Naive thymus-derived CD4-positive, alpha-beta T cell (primary cell): ENCODE measurements at regions of chr22 and their contacts with region 1.

Region 1: GRCh38 chr22:37300551-37301017 is 18.3 kb downstream of the CYTH4 start:
- DNase-seq: peak in 8 of 9 donors; percentile 37 to 54 (median 47)
- ATAC-seq: peak; percentile 48
- H3K4me3 ChIP-seq: peak overlapping the region; percentile 21
- H3K4me3 Mint-ChIP-seq: peak overlapping the region; percentile 60 to 88 (median 76)
- H3K27ac ChIP-seq: peak overlapping the region; percentile 77
- H3K27ac Mint-ChIP-seq: peak overlapping the region; percentile 93 to 99 (median 96)
- H3K4me1 ChIP-seq: peaks cover 26 to 63% of the 10 kb centered on the region in 2 donors
- H3K4me1 Mint-ChIP-seq: peaks cover 47 to 83% (median 78%) of the 10 kb centered on the region in 7 donors
- H3K27me3 ChIP-seq: no peaks in the 10 kb centered on the region
- H3K27me3 Mint-ChIP-seq: no peaks in the 10 kb centered on the region

Region 2: DNA sequence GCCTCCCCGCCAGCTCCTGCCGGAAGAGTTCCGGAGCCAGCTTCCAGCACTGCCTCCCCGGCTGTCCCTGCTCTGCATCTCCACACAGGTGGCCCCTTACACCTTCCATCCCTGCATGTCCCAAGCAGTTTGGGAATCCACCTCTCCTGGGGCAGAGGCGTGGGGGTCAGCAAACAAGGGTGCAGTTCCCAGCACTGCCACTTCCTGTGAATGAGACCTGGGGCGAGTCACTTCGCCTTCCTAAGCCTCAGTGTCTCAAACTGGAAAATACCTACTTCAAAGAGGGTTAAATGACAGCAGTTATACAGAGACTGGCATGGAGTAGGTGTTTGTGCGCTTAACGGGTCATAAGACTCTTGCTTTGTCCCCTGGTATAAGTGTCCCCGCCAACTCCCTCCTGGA is 13.0 kb before region 1 on chr22:
- CTCF ChIA-PET with region 1: interaction called, 3 read pairs
- POLR2A ChIA-PET with region 1: interaction called, 29 read pairs
- intact Hi-C with region 1: no loop called
- DNase-seq: no peak
- ATAC-seq: no peak
- H3K4me3 ChIP-seq: no peak overlapping the region
- H3K4me3 Mint-ChIP-seq: peak overlapping the region in 8 of 10 donors; percentile 21 to 98 (median 44)
- H3K27ac ChIP-seq: peak overlapping the region; percentile 61
- H3K27ac Mint-ChIP-seq: peak overlapping the region in 8 of 9 donors; percentile 60 to 99 (median 86)
- H3K4me1 ChIP-seq: peaks cover 19 to 28% of the 10 kb centered on the region in 2 donors
- H3K4me1 Mint-ChIP-seq: peaks cover 64 to 84% (median 77%) of the 10 kb centered on the region in 7 donors
- H3K27me3 ChIP-seq: no peaks in the 10 kb centered on the region
- H3K27me3 Mint-ChIP-seq: no peaks in the 10 kb centered on the region

Region 3: DNA sequence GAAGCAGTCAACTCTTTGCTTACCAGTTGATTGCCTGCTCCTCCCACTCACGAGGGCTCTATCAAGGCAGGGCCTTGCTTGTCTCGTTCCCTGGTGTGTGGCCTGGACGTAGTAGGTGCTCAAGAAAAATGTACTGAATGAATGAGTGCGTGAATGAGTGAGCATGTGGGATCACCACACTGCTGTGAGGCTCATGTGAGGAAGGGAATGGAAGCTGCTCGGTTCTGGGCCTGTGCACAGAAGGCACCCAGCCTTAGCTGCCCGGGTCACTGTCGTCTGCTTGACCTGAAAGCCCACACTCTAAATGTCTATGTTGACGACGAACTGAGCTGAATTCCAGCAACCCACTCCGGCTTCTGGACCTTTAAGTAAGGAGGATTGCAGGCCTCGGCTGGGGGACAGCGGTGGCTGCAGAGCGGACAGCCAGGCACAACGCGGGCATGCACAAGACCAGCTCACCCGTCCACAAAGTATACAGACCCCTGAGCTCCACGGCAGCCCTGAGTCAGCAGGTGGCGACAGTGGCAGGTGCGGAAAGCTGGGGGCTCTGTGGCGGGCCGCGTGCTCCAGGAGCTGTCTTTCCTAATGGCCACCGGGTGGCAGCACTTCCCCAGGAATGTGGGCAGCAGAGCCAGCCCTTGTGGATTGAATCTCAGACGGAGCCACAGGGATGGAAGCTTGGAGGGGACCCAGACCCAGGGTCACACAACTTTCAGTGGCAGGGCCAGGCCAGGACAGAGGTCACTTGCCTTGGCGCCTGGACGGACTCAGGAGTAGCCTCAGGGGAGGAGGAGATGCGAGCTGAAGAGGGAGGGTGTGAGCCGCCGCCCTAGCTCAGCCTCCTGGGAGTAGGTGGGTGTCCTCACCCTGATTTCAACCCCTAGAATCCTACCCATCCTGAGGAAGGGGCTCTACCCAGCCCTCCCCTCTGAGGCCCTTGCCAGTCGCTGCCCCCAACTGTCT is 751.6 kb after region 1 on chr22:
- CTCF ChIA-PET with region 1: no interaction called
- POLR2A ChIA-PET with region 1: no interaction called
- intact Hi-C with region 1: no loop called
- DNase-seq: peak; percentile 59 to 75 (median 69)
- ATAC-seq: peak; percentile 88
- H3K4me3 ChIP-seq: no peak overlapping the region
- H3K4me3 Mint-ChIP-seq: peak overlapping the region in 2 of 10 donors; percentile 13 to 51
- H3K27ac ChIP-seq: no peak overlapping the region
- H3K27ac Mint-ChIP-seq: peak overlapping the region in 2 of 9 donors; percentile 38 to 71
- H3K4me1 ChIP-seq: peaks cover 10 to 11% of the 10 kb centered on the region in 2 donors
- H3K4me1 Mint-ChIP-seq: peaks cover 0 to 14% (median 9%) of the 10 kb centered on the region in 7 donors
- H3K27me3 ChIP-seq: no peaks in the 10 kb centered on the region
- H3K27me3 Mint-ChIP-seq: peaks cover 0 to 28% (median 8%) of the 10 kb centered on the region in 5 donors